A549 (cell line): ENCODE measurements at regions of chr3 and their contacts with region 1.

Region 1: GRCh38 chr3:13495921-13496723 is 16.0 kb downstream of the HDAC11 start:
- DNase-seq: peak; percentile 59 to 78
- ATAC-seq: peak; percentile 74 to 88
- H3K4me3 ChIP-seq: no peak overlapping the region
- H3K27ac ChIP-seq: peak overlapping the region in 1 of 2 experiments; percentile 41; a peak in 2 of 6 replicates
- H3K4me1 ChIP-seq: no peaks in the 10 kb centered on the region
- CTCF ChIP-seq: peak; percentile 86
- EP300 ChIP-seq: no peak
- POLR2A ChIP-seq: no peak
- RAD21 ChIP-seq: peak; percentile 92 to 98

Region 2: DNA sequence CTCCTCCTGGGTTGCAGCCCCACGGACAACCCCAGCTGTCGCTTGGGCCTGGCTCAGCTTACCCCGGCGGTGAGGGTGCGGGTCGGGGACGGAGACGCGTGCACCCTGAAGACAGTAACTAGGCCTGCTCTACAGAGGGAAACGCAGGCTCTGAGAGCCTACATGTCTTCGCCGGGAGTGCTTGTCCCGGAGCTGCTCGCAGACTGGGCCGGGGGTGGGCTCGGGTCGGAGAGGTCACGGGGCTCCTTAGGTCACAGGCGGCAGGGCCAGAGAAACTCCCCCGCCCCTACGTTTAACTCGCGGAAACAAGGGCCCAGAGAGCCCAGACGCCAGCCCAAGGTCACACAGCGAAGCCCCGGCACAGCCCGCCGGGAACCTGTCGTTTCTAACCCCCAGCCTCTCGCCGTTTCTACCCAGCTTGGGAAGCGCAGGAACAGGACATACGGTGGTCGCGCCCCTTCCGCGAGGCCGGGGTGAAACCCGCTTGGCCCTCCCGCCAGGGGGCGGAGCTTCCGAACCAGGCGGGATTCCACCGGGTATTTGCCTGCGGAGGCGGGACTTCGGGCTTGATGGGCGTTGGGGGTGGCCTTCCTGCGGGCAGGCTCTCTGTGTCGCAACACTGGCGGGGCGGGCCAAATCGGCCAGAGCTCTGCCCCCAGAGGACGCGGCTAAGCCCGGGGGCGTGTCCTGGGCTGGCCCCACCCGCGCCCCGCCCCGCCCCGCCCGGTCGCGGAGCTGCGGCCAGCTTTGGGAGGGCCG is 16.4 kb before region 1 on chr3 and contains the start of gene HDAC11:
- CTCF ChIA-PET with region 1: interaction called, 113 read pairs
- POLR2A ChIA-PET with region 1: no interaction called
- DNase-seq: peak; percentile 96 to 99
- ATAC-seq: peak; percentile 90 to 95
- H3K4me3 ChIP-seq: peak within 1 kb of the TSS; percentile 77
- H3K27ac ChIP-seq: peak within 1 kb of the TSS; percentile 86 to 93
- H3K4me1 ChIP-seq: peaks cover 15% of the 10 kb centered on the region
- CTCF ChIP-seq: no peak
- EP300 ChIP-seq: no peak
- POLR2A ChIP-seq: peak; percentile 51
- RAD21 ChIP-seq: no peak
- polyA plus RNA-seq, gene HDAC11: 5.6 and 5.8 TPM in 2 replicates

Region 3: GRCh38 chr3:13528217-13528867 is 32.2 kb after region 1 on chr3:
- CTCF ChIA-PET with region 1: interaction called, 19 read pairs
- POLR2A ChIA-PET with region 1: no interaction called
- DNase-seq: peak; percentile 49 to 73
- ATAC-seq: peak; percentile 90 to 99
- H3K4me3 ChIP-seq: no peak overlapping the region
- H3K27ac ChIP-seq: peak overlapping the region in 1 of 2 experiments; percentile 25; a peak in 1 of 6 replicates
- H3K4me1 ChIP-seq: no peaks in the 10 kb centered on the region
- CTCF ChIP-seq: no peak
- EP300 ChIP-seq: no peak
- POLR2A ChIP-seq: no peak
- RAD21 ChIP-seq: no peak

Region 4: DNA sequence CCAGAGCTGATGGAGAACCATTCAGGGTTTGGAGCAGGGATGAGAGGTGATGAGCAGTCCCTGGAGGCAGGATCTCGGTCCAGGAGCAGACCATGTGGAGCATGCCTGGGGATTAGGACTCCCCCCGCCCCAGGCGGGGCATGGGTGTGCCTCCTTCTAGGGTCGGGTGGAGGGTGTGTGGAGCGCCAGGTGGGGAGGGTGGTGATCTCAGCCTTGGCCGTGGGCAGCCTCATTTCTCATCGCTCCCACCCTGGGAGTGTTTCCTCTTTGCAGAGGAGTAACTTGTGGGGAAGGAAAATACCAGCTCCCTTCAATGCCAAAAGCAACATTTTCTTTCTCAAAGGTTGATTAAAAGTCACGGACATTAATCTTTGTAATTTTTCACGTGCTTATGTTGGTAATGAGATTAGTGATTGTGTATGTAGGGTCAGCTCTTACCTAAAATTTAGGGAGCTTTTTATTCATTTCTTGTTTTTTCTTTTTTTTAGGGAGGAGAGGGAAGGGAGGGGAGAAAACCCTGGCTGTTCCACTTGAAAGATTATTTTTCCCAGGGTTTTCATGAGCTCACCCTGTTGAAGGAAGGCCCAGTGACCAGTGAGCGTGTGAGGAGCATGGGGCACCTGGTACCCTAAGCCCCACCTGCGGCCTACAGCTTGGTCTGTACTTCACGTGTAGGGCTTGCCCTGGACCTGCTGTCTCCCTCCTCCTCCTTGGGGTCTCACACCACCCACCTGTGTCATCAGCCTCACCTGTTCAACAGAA is 63.8 kb after region 1 on chr3:
- CTCF ChIA-PET with region 1: interaction called, 14 read pairs
- POLR2A ChIA-PET with region 1: no interaction called
- DNase-seq: no peak
- ATAC-seq: no peak
- H3K4me3 ChIP-seq: no peak overlapping the region
- H3K27ac ChIP-seq: no peak overlapping the region
- H3K4me1 ChIP-seq: no peaks in the 10 kb centered on the region
- CTCF ChIP-seq: no peak
- EP300 ChIP-seq: no peak
- POLR2A ChIP-seq: no peak
- RAD21 ChIP-seq: no peak

Region 5: DNA sequence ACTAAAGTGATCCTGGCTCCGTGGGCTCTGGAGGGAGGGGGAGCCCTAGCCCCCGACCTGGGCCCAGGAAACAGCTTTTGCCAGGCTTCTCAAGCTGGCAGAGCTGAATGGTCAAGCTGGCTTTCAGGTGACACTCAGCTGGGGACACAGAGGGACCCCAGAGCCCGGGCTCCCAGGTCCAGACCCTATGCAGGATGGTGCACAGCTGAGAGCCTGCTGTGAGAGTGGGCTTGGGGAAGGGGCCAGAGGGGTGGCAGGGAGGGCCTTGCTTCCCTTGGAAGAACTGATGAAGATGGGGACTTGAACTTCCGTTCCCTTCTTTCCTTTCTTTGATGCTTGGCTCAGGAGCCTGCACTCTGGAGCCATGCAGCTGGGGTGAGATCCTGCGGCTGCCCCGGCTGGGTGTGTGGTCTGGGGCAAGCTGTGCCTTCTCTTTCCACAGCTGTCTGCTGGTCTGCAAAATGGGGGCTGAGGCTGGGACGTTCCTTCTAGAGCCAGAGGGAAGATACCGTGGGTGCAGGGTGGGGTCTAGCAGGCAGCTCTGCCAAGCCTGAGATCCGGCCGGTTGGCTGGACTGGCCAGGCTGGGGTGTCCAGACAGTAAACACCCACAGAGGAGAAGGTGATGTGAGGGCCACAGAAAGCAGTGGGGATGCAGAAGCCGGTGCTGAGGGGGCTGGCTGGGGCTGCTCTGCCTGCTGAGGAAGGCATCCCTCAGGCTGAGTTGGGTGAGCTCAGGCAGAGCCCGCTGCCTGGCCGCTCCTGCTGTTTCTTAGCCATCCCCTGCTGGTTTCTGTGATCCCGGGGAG is 98.7 kb after region 1 on chr3:
- CTCF ChIA-PET with region 1: interaction called, 10 read pairs
- POLR2A ChIA-PET with region 1: no interaction called
- DNase-seq: no peak
- ATAC-seq: peak in 1 of 2 experiments; percentile 29; a peak in 3 of 6 replicates
- H3K4me3 ChIP-seq: no peak overlapping the region
- H3K27ac ChIP-seq: no peak overlapping the region
- H3K4me1 ChIP-seq: peaks cover 10% of the 10 kb centered on the region; the same call in 1 of the 3 replicates
- CTCF ChIP-seq: no peak
- EP300 ChIP-seq: no peak
- POLR2A ChIP-seq: no peak
- RAD21 ChIP-seq: no peak

Region 6: GRCh38 chr3:13648060-13649001 is 152.2 kb after region 1 on chr3:
- CTCF ChIA-PET with region 1: interaction called, 1,096 read pairs
- POLR2A ChIA-PET with region 1: interaction called, 16 read pairs
- DNase-seq: peak; percentile 82 to 95
- ATAC-seq: peak; percentile 65 to 88
- H3K4me3 ChIP-seq: no peak overlapping the region
- H3K27ac ChIP-seq: peak overlapping the region in 1 of 2 experiments; percentile 50; a peak in 2 of 6 replicates
- H3K4me1 ChIP-seq: peaks cover 7% of the 10 kb centered on the region; the same call in 1 of the 3 replicates
- CTCF ChIP-seq: peak; percentile 95
- EP300 ChIP-seq: no peak
- POLR2A ChIP-seq: no peak
- RAD21 ChIP-seq: peak; percentile 98